B cell (primary cell): ENCODE measurements at regions of chr22 and their contacts with region 1.

Region 1: DNA sequence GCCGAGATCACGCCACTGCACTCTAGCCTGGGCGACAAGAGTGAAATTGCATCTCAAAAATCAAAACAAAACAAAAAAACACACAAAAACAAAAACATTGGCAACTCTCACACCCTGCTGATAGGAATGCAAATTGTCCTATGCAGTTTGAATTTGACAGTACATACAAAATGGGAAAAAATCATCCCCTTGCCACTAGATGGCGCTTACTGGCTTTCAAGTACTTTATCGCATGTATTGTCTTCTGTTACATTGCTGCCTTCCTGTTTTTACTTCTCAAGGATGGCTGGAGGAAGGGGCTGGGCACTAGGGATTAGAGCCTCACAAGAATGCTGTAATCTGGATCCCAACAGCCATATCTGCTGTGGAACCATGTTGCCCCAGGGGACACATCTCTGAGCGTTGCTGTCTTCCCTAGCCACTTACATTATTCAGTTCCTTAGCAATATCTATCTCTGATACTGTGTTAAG is 59.4 kb upstream of the A4GALT start:
- DNase-seq: peak; percentile 83
- ATAC-seq: peak; percentile 68
- H3K4me3 ChIP-seq: no peak overlapping the region
- H3K4me3 Mint-ChIP-seq: no peak overlapping the region
- H3K27ac ChIP-seq: no peak overlapping the region
- H3K27ac Mint-ChIP-seq: no peak overlapping the region
- H3K4me1 ChIP-seq: peaks cover 0 to 3% of the 10 kb centered on the region in 2 donors
- H3K4me1 Mint-ChIP-seq: peaks cover 3% of the 10 kb centered on the region
- H3K27me3 ChIP-seq: no peaks in the 10 kb centered on the region
- H3K27me3 Mint-ChIP-seq: no peaks in the 10 kb centered on the region
- CTCF ChIP-seq: peak; percentile 88

Region 2: DNA sequence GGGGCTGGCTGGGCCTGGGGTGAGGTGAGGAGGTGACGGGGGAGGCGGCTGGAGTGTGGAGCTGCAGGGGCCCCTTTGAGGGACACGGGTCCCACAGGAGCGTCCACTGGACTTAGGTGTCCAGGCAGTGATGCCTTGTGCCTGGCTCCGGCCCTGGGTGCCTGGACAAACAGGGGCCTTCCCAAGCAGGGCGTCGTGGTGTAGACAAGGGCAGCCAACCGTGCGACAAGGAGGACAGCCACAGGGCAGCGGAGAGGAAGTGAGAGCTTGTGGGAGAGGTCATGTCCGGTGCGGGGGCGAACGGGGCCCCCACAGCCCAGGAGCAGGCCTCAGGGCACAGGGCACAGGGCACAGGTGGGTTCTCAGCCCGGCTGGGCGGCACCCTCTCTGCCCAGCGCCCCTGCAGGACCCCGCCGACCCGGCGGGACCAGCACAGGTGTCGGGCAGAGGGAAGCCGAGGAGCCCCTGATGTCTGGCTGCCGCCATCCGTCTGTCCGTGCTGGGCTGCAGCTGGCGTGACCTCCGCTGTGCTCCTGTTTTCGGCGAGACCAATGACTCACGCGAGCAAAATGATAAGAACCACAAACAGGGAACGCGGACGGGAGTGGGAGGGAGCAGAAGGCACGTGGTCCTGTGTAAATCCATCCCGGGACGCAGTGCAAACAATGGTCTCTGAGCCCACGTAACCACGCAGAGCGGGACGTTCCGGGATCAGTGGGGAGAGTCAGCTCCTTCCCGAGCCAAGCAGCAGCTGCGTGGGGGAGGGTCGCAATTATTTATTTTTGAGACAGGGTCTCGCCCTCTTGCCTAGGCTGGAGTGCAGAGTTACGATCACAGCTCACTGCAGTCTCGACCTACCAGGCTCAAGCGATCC is 10.3 kb before region 1 on chr22:
- CTCF ChIA-PET with region 1: interaction called, 11 read pairs
- POLR2A ChIA-PET with region 1: no interaction called
- intact Hi-C with region 1: no loop called
- DNase-seq: peak; percentile 75
- ATAC-seq: peak; percentile 91
- H3K4me3 ChIP-seq: peak overlapping the region in 4 of 5 experiments; percentile 21 to 47 (median 30)
- H3K4me3 Mint-ChIP-seq: peak overlapping the region; percentile 83
- H3K27ac ChIP-seq: no peak overlapping the region
- H3K27ac Mint-ChIP-seq: peak overlapping the region; percentile 80
- H3K4me1 ChIP-seq: peaks cover 37 to 57% of the 10 kb centered on the region in 2 donors
- H3K4me1 Mint-ChIP-seq: peaks cover 64% of the 10 kb centered on the region
- H3K27me3 ChIP-seq: no peaks in the 10 kb centered on the region
- H3K27me3 Mint-ChIP-seq: no peaks in the 10 kb centered on the region
- CTCF ChIP-seq: no peak

Region 3: DNA sequence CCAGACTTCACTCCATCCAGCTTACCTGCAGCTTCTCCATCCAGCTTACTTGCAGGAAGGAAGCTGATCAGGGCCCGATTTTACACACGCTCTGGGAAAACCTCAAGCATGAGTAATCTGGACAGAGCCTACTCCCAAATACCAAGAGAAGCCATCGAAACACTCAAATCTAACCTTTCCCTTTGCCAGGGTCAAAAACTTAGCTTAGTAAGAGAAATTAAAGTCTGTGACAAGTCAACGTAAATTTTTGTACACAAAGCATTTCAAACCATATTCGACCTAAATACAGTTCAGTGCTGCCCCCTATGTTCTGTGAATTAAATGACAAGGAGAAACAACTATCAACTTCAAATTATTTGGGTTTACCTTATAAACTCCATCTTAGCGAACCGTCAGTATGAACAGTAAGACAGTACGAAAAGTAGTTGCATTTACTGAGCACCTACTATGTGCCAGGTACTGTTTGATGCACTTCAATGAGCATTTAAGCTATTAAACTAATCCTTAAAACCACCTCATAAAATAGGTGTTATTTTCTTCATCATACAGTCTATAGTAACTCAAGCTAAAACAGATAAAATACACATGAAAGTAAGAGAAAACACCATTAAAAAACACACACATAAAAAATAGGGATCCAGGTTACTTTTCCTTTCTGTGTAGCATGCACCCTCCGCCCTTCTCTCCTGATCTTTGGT is 40.1 kb after region 1 on chr22:
- CTCF ChIA-PET with region 1: interaction called, 4 read pairs
- POLR2A ChIA-PET with region 1: no interaction called
- intact Hi-C with region 1: loop called (anchors 2 kb)
- DNase-seq: peak; percentile 70
- ATAC-seq: no peak
- H3K4me3 ChIP-seq: no peak overlapping the region
- H3K4me3 Mint-ChIP-seq: no peak overlapping the region
- H3K27ac ChIP-seq: no peak overlapping the region
- H3K27ac Mint-ChIP-seq: no peak overlapping the region
- H3K4me1 ChIP-seq: peaks cover 0 to 4% of the 10 kb centered on the region in 2 donors
- H3K4me1 Mint-ChIP-seq: peaks cover 4% of the 10 kb centered on the region
- H3K27me3 ChIP-seq: no peaks in the 10 kb centered on the region
- H3K27me3 Mint-ChIP-seq: no peaks in the 10 kb centered on the region
- CTCF ChIP-seq: peak; percentile 60

Region 4: DNA sequence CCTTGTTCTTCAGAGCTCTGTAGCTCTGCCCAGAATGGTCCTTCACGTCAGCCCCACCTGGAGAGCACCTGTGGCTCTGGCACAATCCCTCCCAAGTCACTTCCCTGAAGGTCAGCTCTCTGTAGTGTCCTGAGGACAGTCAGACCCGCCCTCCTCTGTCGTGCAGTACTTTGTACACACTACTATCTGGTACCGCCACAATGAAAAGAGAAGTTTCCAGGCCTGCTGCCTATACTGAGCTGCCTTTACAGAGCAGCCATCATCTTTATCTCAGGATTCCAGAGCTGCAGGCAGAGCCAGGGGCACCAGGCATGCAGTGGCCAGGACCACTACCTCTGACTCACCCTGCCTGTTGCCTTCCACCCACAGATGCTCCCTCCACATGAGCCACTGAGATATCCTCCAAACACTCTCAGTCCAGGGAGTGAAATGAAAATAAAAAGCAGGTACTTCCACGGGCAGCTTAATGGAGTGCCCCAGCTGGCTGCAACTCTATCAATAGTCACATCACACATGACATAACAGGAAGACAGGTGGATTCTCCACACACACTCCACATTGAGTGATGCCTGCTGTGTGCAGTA is 227.5 kb after region 1 on chr22:
- CTCF ChIA-PET with region 1: no interaction called
- POLR2A ChIA-PET with region 1: interaction called, 10 read pairs
- intact Hi-C with region 1: no loop called
- DNase-seq: no peak
- ATAC-seq: no peak
- H3K4me3 ChIP-seq: no peak overlapping the region
- H3K4me3 Mint-ChIP-seq: no peak overlapping the region
- H3K27ac ChIP-seq: no peak overlapping the region
- H3K27ac Mint-ChIP-seq: peak overlapping the region; percentile 37
- H3K4me1 ChIP-seq: peaks cover 20 to 27% of the 10 kb centered on the region in 2 donors
- H3K4me1 Mint-ChIP-seq: peaks cover 59% of the 10 kb centered on the region
- H3K27me3 ChIP-seq: no peaks in the 10 kb centered on the region
- H3K27me3 Mint-ChIP-seq: no peaks in the 10 kb centered on the region
- CTCF ChIP-seq: no peak

Region 5: DNA sequence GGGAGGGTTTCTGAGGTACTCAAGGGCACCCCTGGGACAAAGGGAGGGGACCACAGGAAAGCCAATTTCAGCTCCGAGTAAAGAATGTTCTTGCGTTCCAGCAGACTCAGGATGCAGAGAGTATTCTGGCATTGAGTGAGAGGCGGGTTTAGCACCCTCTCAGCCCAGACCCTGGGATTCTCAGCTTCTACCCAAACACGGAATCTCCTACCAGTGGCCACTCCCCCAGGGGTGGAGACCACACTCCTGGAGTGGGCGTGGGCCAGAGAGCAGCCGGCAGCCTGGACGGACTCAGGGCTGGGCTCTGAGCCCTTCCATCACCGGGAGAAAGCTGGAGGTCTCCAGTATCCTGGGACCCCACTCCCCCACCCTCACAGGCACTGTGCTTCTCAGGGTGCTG is 432.9 kb after region 1 on chr22:
- CTCF ChIA-PET with region 1: no interaction called
- POLR2A ChIA-PET with region 1: no interaction called
- intact Hi-C with region 1: no loop called
- DNase-seq: no peak
- ATAC-seq: no peak
- H3K4me3 ChIP-seq: no peak overlapping the region
- H3K4me3 Mint-ChIP-seq: no peak overlapping the region
- H3K27ac ChIP-seq: no peak overlapping the region
- H3K27ac Mint-ChIP-seq: no peak overlapping the region
- H3K4me1 ChIP-seq: no peaks in the 10 kb centered on the region
- H3K4me1 Mint-ChIP-seq: no peaks in the 10 kb centered on the region
- H3K27me3 ChIP-seq: no peaks in the 10 kb centered on the region
- H3K27me3 Mint-ChIP-seq: peaks cover 14% of the 10 kb centered on the region
- CTCF ChIP-seq: no peak